ENCODE measurements at regions of chr3 and their contacts with region 1.

Region 1: GRCh38 chr3:71859123-71859519 is 74.2 kb upstream of the PROK2 start:
- DNase-seq: peak; percentile 8
- H3K4me3 ChIP-seq: no peak overlapping the region
- H3K27ac ChIP-seq: no peak overlapping the region
- H3K4me1 ChIP-seq: no peaks in the 10 kb centered on the region
- H3K27me3 ChIP-seq: no peaks in the 10 kb centered on the region
- CTCF ChIP-seq: no peak
- POLR2A ChIP-seq: no peak

Region 2: GRCh38 chr3:71725279-71725991 is 133.7 kb before region 1 on chr3 and contains the start of gene EIF4E3:
- CTCF ChIA-PET with region 1: no interaction called
- POLR2A ChIA-PET with region 1: no interaction called
- dilution Hi-C with region 1: no loop called
- intact Hi-C with region 1: loop called (anchors 1 kb)
- DNase-seq: no peak
- H3K4me3 ChIP-seq: peak within 1 kb of the TSS; percentile 6 to 54 (median 43)
- H3K27ac ChIP-seq: no peak within 1 kb of the TSS
- H3K4me1 ChIP-seq: peaks cover 5% of the 10 kb centered on the region
- H3K27me3 ChIP-seq: peaks cover 22 to 29% of the 10 kb centered on the region in 2 experiments
- CTCF ChIP-seq: no peak
- POLR2A ChIP-seq: no peak
- total RNA-seq, gene EIF4E3: 4.9 and 7.6 TPM in 2 replicates

Region 3: GRCh38 chr3:71955240-71956068 is 96.3 kb after region 1 on chr3:
- CTCF ChIA-PET with region 1: no interaction called
- POLR2A ChIA-PET with region 1: no interaction called
- dilution Hi-C with region 1: no loop called
- intact Hi-C with region 1: no loop called
- DNase-seq: peak; percentile 77
- H3K4me3 ChIP-seq: no peak overlapping the region
- H3K27ac ChIP-seq: no peak overlapping the region
- H3K4me1 ChIP-seq: no peaks in the 10 kb centered on the region
- H3K27me3 ChIP-seq: peaks cover 0 to 9% of the 10 kb centered on the region in 2 experiments
- CTCF ChIP-seq: peak; percentile 65 to 77
- POLR2A ChIP-seq: no peak

Region 4: GRCh38 chr3:72152551-72153476 is 293.7 kb after region 1 on chr3:
- CTCF ChIA-PET with region 1: no interaction called
- POLR2A ChIA-PET with region 1: no interaction called
- dilution Hi-C with region 1: no loop called
- intact Hi-C with region 1: no loop called
- DNase-seq: peak; percentile 77
- H3K4me3 ChIP-seq: no peak overlapping the region
- H3K27ac ChIP-seq: no peak overlapping the region
- H3K4me1 ChIP-seq: no peaks in the 10 kb centered on the region
- H3K27me3 ChIP-seq: peaks cover 5 to 15% of the 10 kb centered on the region in 2 experiments
- CTCF ChIP-seq: no peak
- POLR2A ChIP-seq: no peak

Measured in endothelial cell of umbilical vein (primary cell).